SK-N-SH (cell line): ENCODE measurements at regions of chr9 and their contacts with region 1.

Region 1: DNA sequence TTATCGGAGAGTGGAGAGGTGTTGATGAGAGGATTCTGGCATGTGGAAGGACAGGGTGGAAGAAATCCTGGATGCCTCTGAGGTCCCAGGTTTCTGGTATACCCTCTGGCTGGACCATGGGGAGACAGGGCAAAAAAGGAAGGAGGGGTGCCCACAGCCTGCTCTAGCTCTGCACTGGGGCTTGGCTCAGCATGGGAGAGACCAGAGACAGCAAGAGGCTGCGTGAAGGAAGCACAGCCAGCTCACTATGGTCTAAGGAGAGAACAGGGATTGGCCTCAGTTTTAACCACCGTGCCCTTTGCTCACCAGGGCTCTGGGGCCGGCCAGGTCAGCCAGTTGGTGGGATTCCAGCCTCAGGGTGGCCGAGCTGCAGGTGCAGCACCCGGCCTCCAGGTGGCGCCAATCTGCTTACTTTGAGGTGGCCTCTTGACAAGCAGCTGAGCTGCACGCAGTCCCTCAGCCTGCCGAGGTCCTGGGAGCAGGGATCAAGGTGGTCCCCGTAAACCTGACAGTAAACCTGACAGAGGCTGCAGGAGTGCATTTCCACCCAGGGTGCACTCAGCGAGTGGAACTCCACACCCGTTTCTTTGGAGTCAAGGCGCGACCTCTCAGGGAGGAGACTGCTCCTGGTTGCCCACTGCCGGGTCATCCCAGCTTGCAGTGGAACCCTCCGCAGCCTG is 25.0 kb upstream of the SPTLC1 start:
- DNase-seq: peak; percentile 86
- H3K4me3 ChIP-seq: peak overlapping the region in 1 of 2 experiments; percentile 43; a peak in 1 of 4 replicates
- H3K27ac ChIP-seq: no peak overlapping the region
- H3K4me1 ChIP-seq: peaks cover 4 to 14% of the 10 kb centered on the region in 2 experiments; a peak in 2 of 4 replicates
- H3K27me3 ChIP-seq: no peaks in the 10 kb centered on the region
- CTCF ChIP-seq: peak; percentile 76
- EP300 ChIP-seq: no peak
- RAD21 ChIP-seq: peak; percentile 88

Region 2: GRCh38 chr9:92206488-92206887 is 66.3 kb after region 1 on chr9:
- CTCF ChIA-PET with region 1: interaction called, 18 read pairs
- POLR2A ChIA-PET with region 1: no interaction called
- DNase-seq: no peak
- H3K4me3 ChIP-seq: no peak overlapping the region
- H3K27ac ChIP-seq: no peak overlapping the region
- H3K4me1 ChIP-seq: no peaks in the 10 kb centered on the region
- H3K27me3 ChIP-seq: no peaks in the 10 kb centered on the region
- CTCF ChIP-seq: no peak
- EP300 ChIP-seq: no peak
- RAD21 ChIP-seq: no peak

Region 3: GRCh38 chr9:92234514-92234913 is 94.3 kb after region 1 on chr9:
- CTCF ChIA-PET with region 1: interaction called, 47 read pairs
- POLR2A ChIA-PET with region 1: interaction called, 7 read pairs
- DNase-seq: no peak
- H3K4me3 ChIP-seq: no peak overlapping the region
- H3K27ac ChIP-seq: no peak overlapping the region
- H3K4me1 ChIP-seq: no peaks in the 10 kb centered on the region
- H3K27me3 ChIP-seq: no peaks in the 10 kb centered on the region
- CTCF ChIP-seq: no peak
- EP300 ChIP-seq: no peak
- RAD21 ChIP-seq: no peak

Region 4: DNA sequence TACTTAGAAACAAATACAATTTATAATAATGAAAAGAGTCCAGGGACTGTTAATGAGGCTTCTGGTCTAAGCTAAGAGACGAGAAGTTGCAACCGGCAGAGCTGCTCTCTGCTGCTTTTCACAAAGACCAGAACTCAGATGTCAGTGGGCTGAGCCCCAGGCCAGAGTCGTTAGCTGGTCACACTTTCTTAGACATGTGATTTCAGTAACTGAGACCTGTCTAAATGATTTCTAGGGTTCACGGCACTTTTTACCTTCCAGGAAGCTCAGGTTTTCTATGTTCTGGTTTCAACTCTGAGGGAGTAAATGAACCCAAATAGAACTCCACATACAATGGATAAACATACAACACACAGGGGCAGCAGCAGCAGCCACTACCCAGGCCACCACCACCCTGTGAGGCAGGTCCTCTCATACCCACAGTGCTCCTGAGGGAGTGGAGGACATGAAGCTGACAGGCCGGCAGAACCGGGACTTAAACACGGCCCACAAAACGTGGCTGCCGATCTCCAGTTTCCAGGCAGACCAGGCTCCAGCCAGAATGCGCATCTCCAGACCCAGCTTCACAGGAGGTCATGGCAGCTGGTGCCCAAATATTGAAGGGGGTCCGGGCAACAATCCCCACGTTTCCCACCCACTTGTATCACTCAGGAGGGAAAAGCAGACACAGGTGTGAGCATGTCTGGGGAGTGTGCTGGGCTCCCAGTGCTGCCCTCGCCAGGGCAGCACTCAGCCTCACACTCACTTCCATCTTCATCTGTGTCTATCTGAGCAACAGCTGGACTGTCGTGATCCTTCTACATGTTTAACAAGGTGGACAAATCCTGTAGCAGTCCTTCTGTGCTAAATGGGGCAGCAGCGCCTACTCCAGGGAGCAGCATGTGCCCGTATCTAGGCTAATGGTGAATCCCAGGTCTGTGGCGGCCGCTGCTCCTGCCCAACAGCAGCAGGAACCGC is 114.4 kb after region 1 on chr9:
- CTCF ChIA-PET with region 1: interaction called, 65 read pairs
- POLR2A ChIA-PET with region 1: no interaction called
- DNase-seq: no peak
- H3K4me3 ChIP-seq: no peak overlapping the region
- H3K27ac ChIP-seq: no peak overlapping the region
- H3K4me1 ChIP-seq: no peaks in the 10 kb centered on the region
- H3K27me3 ChIP-seq: no peaks in the 10 kb centered on the region
- CTCF ChIP-seq: no peak
- EP300 ChIP-seq: no peak
- RAD21 ChIP-seq: no peak

Region 5: GRCh38 chr9:92276331-92277032 is 136.3 kb after region 1 on chr9:
- CTCF ChIA-PET with region 1: interaction called, 45 read pairs
- POLR2A ChIA-PET with region 1: no interaction called
- DNase-seq: no peak
- H3K4me3 ChIP-seq: no peak overlapping the region
- H3K27ac ChIP-seq: no peak overlapping the region
- H3K4me1 ChIP-seq: peaks cover 0 to 7% of the 10 kb centered on the region in 2 experiments; a peak in 2 of 4 replicates
- H3K27me3 ChIP-seq: no peaks in the 10 kb centered on the region
- CTCF ChIP-seq: no peak
- EP300 ChIP-seq: no peak
- RAD21 ChIP-seq: no peak

Region 6: DNA sequence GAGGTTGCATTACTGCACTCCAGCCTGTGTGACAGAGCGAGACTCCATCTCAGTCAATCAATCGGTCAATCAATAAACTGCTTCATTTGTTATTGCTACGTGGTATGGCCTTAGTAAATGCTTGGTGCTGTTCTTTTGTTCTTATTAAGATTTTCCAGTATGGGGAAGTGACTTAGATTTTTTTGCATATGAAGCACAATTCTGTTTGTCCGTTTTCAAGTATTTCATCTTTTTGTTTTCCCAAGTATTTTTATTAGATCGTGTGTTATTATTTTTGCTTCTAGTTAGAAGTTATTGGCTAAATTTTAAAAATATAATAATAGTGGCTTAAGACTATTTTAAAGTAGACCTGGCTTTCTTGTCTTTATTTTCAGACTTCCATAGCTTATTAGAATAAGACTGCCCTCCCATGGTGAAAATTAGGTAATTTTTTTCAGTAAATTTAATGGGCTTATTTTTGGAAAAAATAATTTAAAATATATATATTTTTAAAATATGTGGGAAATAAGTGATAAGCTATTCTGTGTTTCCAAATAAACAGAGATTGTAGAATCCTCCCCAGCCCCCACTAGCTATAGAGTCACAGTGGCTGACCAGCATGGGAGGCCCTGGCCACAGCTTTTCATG is 298.8 kb after region 1 on chr9:
- CTCF ChIA-PET with region 1: interaction called, 14 read pairs
- POLR2A ChIA-PET with region 1: no interaction called
- DNase-seq: peak; percentile 19
- H3K4me3 ChIP-seq: no peak overlapping the region
- H3K27ac ChIP-seq: peak overlapping the region in 1 of 2 experiments; percentile 41; a peak in 1 of 4 replicates
- H3K4me1 ChIP-seq: peaks cover 0 to 5% of the 10 kb centered on the region in 2 experiments; a peak in 1 of 4 replicates
- H3K27me3 ChIP-seq: no peaks in the 10 kb centered on the region
- CTCF ChIP-seq: peak; percentile 55
- EP300 ChIP-seq: no peak
- RAD21 ChIP-seq: peak; percentile 66

Region 7: GRCh38 chr9:92481040-92481633 is 340.9 kb after region 1 on chr9:
- CTCF ChIA-PET with region 1: no interaction called
- POLR2A ChIA-PET with region 1: no interaction called
- DNase-seq: no peak
- H3K4me3 ChIP-seq: no peak overlapping the region
- H3K27ac ChIP-seq: peak overlapping the region; percentile 59 to 89
- H3K4me1 ChIP-seq: peaks cover 23 to 34% of the 10 kb centered on the region in 2 experiments
- H3K27me3 ChIP-seq: no peaks in the 10 kb centered on the region
- CTCF ChIP-seq: no peak
- EP300 ChIP-seq: no peak
- RAD21 ChIP-seq: no peak

Region 8: GRCh38 chr9:92634712-92635605 is 494.7 kb after region 1 on chr9:
- CTCF ChIA-PET with region 1: interaction called, 30 read pairs
- POLR2A ChIA-PET with region 1: no interaction called
- DNase-seq: peak; percentile 92
- H3K4me3 ChIP-seq: peak overlapping the region in 1 of 2 experiments; percentile 40; a peak in 1 of 4 replicates
- H3K27ac ChIP-seq: no peak overlapping the region
- H3K4me1 ChIP-seq: no peaks in the 10 kb centered on the region
- H3K27me3 ChIP-seq: no peaks in the 10 kb centered on the region
- CTCF ChIP-seq: peak; percentile 94
- EP300 ChIP-seq: no peak
- RAD21 ChIP-seq: peak; percentile 94